Heart right ventricle (tissue), 16 donors: ENCODE measurements at regions of chr13 and their contacts with region 1.

Region 1: GRCh38 chr13:29595380-29596063 is at the start of gene SLC7A1:
- DNase-seq: peak; percentile 44 to 77
- ATAC-seq: peak; percentile 87 to 94 (median 92)
- H3K4me3 ChIP-seq: peak within 1 kb of the TSS; percentile 63 to 91 (median 82)
- H3K27ac ChIP-seq: peak within 1 kb of the TSS; percentile 67 to 90 (median 82)
- H3K4me1 ChIP-seq: peaks cover 3 to 20% (median 12%) of the 10 kb centered on the region in 9 donors
- H3K27me3 ChIP-seq: peaks cover 0 to 11% (median 0%) of the 10 kb centered on the region in 7 donors
- CTCF ChIP-seq: peak in 1 of 9 donors; percentile 3
- total RNA-seq, gene SLC7A1: 11.4 to 29.2 (median 17.4) TPM

Region 2: DNA sequence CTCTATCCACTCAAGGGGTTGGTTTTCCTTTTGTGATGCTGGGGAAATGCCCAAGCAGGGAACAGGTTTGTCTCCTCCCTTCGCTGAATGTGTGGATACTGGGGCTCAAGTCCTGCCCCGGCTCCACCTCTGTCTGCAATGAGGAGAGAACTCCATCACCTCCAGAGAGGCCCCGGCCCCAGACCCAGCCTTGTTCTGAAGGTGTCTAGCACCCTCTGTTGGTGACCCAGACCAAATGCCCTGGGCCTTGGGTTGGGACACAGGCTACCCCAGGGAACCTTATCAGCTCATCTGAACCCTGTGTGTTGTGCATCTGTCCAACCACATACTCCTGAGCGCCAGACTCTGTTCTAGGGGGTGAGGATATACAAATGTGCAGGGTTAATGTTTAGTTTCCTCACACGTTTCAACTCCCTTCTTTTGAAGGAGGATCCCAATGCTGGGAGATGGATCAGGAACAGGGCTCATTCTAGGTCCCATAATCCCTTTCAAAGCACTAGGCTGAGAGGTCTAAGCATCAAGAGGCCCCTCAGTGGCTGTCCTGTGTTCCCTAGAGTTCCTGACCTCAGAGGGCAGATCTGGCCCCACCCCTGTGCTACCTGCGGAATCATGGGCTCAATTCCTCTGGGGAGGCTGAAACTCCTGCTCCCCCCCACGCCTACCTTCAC is 112.5 kb after region 1 on chr13:
- intact Hi-C with region 1: loop called in 1 of 10 experiments (anchors 10 kb)
- DNase-seq: no peak
- ATAC-seq: peak; percentile 44 to 76 (median 64)
- H3K4me3 ChIP-seq: no peak overlapping the region
- H3K27ac ChIP-seq: no peak overlapping the region
- H3K4me1 ChIP-seq: peaks cover 0 to 19% (median 11%) of the 10 kb centered on the region in 9 donors
- H3K27me3 ChIP-seq: peaks cover 0 to 6% (median 0%) of the 10 kb centered on the region in 7 donors
- CTCF ChIP-seq: peak in 8 of 9 donors; percentile 14 to 64 (median 58)